ENCODE measurements at regions of chr2 and their contacts with region 1.

Region 1: GRCh38 chr2:85642725-85643124 is 25.3 kb downstream of the SFTPB start:
- DNase-seq: no peak
- H3K4me3 ChIP-seq: no peak overlapping the region
- CTCF ChIP-seq: no peak

Region 2: DNA sequence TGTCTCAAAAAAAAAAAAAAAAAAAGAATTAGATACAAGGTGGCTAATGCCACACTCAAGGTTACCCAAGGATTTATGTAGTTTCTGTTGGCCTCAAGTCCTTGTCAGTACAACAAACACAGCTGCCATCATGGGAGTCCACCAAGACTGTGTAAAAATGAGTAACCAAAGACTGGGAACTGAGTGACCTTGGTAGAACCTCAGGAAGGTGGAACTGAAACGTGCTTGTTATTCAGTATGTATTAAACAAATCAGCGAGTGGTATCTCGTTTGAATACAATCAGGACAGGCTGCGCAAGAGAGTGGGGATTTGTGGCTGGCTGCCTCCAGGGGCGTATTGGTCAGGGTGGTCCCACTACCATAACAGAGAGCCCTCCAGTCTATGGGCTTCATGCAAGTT is 26.8 kb after region 1 on chr2:
- CTCF ChIA-PET with region 1: interaction called, 19 read pairs
- POLR2A ChIA-PET with region 1: no interaction called
- DNase-seq: no peak
- H3K4me3 ChIP-seq: no peak overlapping the region
- CTCF ChIP-seq: no peak